Activated CD4-positive, alpha-beta memory T cell treated with anti-CD3 and anti-CD28 coated beads for 36 hours (primary cell): ENCODE measurements at regions of chr11 and their contacts with region 1.

Region 1: GRCh38 chr11:86938900-86939880 is 16.0 kb downstream of the FZD4 start:
- DNase-seq: no peak
- H3K4me3 Mint-ChIP-seq: no peak overlapping the region
- H3K27ac Mint-ChIP-seq: no peak overlapping the region
- H3K4me1 Mint-ChIP-seq: no peaks in the 10 kb centered on the region
- H3K27me3 Mint-ChIP-seq: peaks cover 1% of the 10 kb centered on the region

Region 2: GRCh38 chr11:86571273-86571948 is 367.8 kb before region 1 on chr11:
- CTCF ChIA-PET with region 1: no interaction called
- POLR2A ChIA-PET with region 1: no interaction called
- intact Hi-C with region 1: no loop called
- DNase-seq: no peak
- H3K4me3 Mint-ChIP-seq: no peak overlapping the region
- H3K27ac Mint-ChIP-seq: no peak overlapping the region
- H3K4me1 Mint-ChIP-seq: no peaks in the 10 kb centered on the region
- H3K27me3 Mint-ChIP-seq: no peaks in the 10 kb centered on the region

Region 3: DNA sequence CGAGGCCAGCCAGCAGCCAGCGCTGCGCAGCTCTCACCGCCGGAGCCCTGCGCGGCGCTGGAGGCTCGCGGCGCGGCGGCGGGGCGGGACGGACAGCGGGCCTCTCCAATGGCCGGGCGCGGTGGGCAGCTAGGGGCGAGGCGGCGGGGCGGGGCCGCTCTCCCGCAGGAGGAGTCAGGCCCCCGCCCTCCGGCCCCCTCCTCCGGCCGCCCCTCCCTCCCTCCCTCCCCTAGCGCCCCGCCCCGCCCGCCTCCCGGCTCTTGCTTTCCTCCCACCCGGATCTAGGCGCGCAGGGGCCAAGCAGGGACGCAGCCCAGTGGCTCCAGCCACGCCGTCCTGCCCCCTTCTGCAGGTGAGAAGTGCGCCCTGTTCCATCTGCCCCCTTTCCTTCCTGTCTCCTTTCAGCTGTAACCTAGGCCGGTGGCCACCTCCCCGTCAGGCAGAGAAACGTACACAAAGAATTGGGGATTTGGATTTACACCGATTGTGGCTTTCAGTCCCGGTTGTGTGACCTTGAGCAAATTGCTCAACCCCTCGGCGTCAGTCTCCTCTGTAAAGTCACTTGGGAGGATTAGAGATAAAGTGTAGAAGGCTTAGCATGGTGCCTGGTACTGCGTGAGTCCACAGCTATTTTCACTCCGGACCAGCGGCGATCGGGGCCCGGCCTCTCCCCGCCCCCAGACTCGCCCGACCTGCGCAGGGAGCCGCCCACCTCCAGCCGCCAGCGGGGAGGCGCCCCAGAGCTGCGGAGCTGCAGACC is 16.4 kb after region 1 on chr11 and contains the start of gene FZD4:
- CTCF ChIA-PET with region 1: interaction called, 18 read pairs
- POLR2A ChIA-PET with region 1: no interaction called
- intact Hi-C with region 1: no loop called
- DNase-seq: peak; percentile 71
- H3K4me3 Mint-ChIP-seq: peak within 1 kb of the TSS; percentile 77
- H3K27ac Mint-ChIP-seq: no peak within 1 kb of the TSS
- H3K4me1 Mint-ChIP-seq: peaks cover 9% of the 10 kb centered on the region
- H3K27me3 Mint-ChIP-seq: peaks cover 34% of the 10 kb centered on the region
- total RNA-seq, gene FZD4: 0.33 to 0.36 TPM

Region 4: GRCh38 chr11:87290304-87290922 is 351.2 kb after region 1 on chr11:
- CTCF ChIA-PET with region 1: interaction called, 44 read pairs
- POLR2A ChIA-PET with region 1: no interaction called
- intact Hi-C with region 1: loop called (anchors 1 kb)
- DNase-seq: no peak
- H3K4me3 Mint-ChIP-seq: no peak overlapping the region
- H3K27ac Mint-ChIP-seq: no peak overlapping the region
- H3K4me1 Mint-ChIP-seq: no peaks in the 10 kb centered on the region
- H3K27me3 Mint-ChIP-seq: no peaks in the 10 kb centered on the region

Region 5: DNA sequence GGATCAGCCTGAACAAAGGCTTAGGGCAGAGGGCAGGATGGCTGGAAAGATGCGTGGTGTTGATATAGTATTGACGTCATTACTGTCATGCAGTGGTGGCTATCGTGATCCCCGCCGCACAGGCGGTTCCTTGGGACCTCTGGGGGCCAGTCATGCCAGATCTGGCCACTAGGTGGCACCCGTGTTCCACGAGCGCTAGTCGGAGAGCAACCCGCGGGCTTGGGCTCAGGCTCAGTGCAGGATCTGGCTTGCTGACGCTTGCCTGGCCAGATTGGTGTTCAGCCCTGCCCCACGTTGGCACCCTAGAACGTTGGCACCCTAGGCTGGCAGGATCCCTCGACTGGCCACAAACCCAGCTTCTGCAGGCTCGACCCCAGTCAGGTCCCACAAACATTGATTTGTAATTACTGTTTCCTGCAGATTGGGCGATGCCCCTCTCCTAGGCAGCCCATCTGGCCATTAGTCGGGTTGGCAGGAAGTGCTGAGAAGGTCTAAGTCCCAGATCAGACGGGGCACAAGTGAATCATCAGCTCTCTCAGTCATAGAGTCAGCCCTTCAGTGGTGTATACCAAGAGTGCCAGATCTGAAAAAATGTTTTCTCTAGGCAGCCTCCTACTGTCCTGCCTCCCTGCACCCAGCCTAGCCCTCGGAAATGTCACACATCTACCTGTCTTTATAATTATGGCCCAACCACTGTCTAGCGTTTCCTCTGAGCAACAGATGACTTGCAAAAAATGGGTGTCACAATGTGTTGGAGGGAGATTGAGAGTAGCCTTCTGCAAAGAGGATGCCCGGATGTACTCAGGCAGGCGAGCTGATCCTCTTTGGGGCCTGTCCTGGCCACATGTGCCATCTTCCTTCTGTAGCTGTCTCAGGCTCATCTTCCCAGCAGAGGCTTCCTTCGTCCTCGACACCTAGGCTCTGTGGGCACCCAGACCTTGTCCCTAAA is 413.8 kb after region 1 on chr11:
- CTCF ChIA-PET with region 1: interaction called, 4 read pairs
- POLR2A ChIA-PET with region 1: no interaction called
- intact Hi-C with region 1: loop called (anchors 5 kb)
- DNase-seq: peak; percentile 90
- H3K4me3 Mint-ChIP-seq: no peak overlapping the region
- H3K27ac Mint-ChIP-seq: no peak overlapping the region
- H3K4me1 Mint-ChIP-seq: peaks cover 8% of the 10 kb centered on the region
- H3K27me3 Mint-ChIP-seq: peaks cover 5% of the 10 kb centered on the region